Calu3 (cell line): ENCODE measurements at regions of chr12 and their contacts with region 1.

Region 1: DNA sequence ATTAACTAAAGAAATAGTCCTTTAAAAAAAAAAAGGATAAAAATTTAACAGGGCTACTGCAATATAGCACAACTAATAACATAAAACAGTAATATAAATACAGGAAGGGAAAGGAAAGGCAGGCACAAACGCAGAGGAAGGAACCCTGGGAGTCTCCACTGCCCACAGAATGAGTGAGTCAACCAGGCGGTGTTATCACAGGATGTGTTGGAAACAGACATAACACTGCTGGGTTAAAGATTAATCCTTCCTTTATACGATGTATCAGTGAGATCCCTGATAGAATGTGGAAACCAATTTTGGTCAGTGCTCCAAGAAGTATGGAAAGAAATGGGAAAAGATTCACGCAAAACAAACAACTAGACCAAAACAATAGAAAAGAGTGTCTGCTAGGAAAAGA is 47.9 kb downstream of the FGD6 start:
- DNase-seq: peak; percentile 80
- H3K4me3 Mint-ChIP-seq: peak overlapping the region; percentile 39
- H3K27ac Mint-ChIP-seq: peak overlapping the region; percentile 90
- H3K4me1 Mint-ChIP-seq: peaks cover 38% of the 10 kb centered on the region
- H3K27me3 Mint-ChIP-seq: no peaks in the 10 kb centered on the region
- CTCF ChIP-seq: no peak

Region 2: DNA sequence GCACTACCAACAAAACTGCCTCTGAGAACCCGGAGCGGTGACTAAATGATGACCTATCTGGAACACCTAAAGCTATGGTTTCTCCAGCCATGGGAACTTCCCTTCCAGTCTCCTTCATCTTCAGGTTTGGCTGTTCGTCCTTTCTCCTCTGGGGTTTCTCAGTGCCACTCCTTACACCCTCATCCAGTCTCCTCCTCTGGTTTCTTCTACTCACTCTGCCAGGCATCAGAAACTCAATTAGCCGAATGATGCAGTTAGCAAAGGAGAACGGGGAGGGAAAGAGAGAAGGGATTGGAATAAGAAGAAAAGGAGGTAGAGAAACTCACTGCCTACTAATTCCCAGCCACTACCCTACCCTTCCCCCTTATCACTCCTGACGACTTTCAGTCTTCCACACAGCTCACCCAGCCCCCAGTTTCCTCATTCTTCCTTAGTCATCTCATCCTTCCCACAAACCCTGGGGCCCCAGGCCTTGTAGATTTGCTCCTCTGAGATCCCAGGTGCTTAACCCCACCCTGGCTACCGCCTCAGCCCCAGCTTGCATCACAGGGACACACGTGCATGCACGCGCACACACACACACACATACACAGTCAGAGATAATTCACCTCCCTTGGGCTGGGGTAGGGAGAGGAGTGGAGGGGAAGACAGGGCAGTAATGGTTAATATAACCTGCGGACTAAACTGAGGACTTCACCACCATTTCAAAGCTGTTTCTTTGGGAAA is 34.9 kb after region 1 on chr12:
- CTCF ChIA-PET with region 1: interaction called, 4 read pairs
- intact Hi-C with region 1: loop called (anchors 5 kb)
- DNase-seq: peak; percentile 94
- H3K4me3 Mint-ChIP-seq: peak overlapping the region; percentile 70
- H3K27ac Mint-ChIP-seq: peak overlapping the region; percentile 98
- H3K4me1 Mint-ChIP-seq: peaks cover 82% of the 10 kb centered on the region
- H3K27me3 Mint-ChIP-seq: no peaks in the 10 kb centered on the region
- CTCF ChIP-seq: no peak

Region 3: GRCh38 chr12:95240556-95240955 is 71.2 kb after region 1 on chr12:
- CTCF ChIA-PET with region 1: no interaction called
- intact Hi-C with region 1: no loop called
- DNase-seq: no peak
- H3K4me3 Mint-ChIP-seq: no peak overlapping the region
- H3K27ac Mint-ChIP-seq: no peak overlapping the region
- H3K4me1 Mint-ChIP-seq: peaks cover 24% of the 10 kb centered on the region
- H3K27me3 Mint-ChIP-seq: no peaks in the 10 kb centered on the region
- CTCF ChIP-seq: no peak